HCT116 (cell line): ENCODE measurements at regions of chr16 and their contacts with region 1.

Region 1: DNA sequence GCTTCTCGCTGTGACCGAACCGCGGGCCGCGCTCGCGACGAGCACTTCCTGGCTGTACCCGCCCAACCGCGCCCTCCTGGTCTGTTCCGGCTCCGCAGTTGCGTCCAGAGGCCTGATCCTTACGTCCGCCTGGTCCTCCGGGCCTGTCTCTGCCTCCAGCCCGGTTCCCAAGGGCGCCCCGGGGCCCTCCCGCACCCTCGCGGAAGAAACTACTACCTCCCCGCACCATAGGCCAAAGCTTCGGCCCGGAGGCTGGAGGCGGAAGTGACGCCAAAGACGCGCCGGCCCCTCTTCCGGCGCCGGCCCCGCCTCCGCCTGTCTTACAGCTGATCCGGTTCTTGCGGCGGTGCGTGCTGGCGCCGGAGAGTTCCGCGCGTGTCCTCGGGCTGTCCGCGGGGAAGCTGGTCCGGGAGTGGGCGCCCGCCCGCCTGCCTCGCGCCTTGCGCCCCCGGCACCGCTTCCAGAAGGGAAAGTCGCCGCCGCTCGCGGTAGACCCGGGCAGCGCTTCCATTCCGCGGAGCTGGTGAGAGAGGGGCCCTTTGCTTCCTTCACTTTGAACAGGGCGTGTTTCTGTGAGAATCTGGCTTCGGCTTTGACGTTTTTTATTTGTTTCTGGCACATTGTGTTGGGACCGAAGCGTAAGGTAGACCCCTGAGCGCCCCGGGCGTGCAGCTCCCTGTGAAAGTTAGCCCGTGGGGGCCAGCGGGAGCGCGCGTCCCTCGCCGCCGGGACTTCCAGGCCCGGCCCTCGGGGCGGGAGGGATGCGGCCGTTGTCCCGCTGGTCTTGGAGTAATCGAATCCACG is at the start of gene ZNF778:
- DNase-seq: peak; percentile 73
- ATAC-seq: peak; percentile 84
- H3K4me3 ChIP-seq: peak within 1 kb of the TSS; percentile 88 to 93
- H3K27ac ChIP-seq: peak within 1 kb of the TSS; percentile 74
- H3K4me1 ChIP-seq: peaks cover 0 to 16% of the 10 kb centered on the region in 2 experiments; a peak in 3 of 4 replicates
- H3K27me3 ChIP-seq: no peaks in the 10 kb centered on the region
- CTCF ChIP-seq: no peak
- POLR2A ChIP-seq: peak; percentile 41
- RAD21 ChIP-seq: no peak; the same call in 1 of the 2 replicates
- total RNA-seq, gene ZNF778: 19.5 TPM

Region 2: DNA sequence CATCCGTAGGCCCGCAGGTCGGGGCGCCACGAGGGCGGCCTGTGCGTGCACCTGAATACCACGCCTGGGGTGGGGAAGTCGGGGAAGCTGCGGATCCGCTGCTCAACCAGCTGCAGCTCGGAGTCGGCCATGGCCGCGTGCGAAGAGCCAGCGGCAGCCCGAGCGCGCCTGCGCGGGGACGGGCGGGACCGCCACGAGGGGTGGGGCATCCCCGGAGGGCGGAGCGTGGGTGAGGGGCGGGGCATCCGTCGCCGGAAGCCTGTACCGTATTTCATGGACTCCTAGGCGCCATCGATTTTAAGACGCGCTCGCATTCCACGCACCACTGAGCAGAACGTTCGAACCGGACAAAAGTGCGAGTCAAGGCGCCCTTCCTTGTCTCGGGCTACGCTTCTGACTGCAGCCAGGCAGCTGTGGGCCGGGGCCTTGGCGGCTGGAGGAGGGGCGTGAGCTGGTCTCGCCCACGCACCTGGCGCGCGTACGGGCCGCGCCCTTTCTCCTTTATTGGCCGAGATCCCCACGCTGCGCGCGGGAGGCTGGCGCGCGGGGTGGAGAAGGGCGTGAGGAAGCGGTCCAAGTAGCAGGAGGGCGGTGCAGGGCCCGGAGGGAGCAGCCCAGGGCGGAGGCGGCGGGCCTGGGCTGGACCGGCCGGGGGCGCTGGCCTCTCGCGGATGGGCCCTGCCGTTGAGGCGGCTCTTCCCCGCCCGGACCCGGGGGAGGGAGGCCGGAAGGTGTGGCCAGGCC is 405.6 kb before region 1 on chr16 and contains the start of gene APRT:
- CTCF ChIA-PET with region 1: interaction called, 3 read pairs
- POLR2A ChIA-PET with region 1: interaction called, 10 read pairs
- RAD21 ChIA-PET with region 1: no interaction called
- intact Hi-C with region 1: loop called (anchors 1 kb)
- DNase-seq: peak; percentile 91
- ATAC-seq: peak; percentile 64
- H3K4me3 ChIP-seq: peak within 1 kb of the TSS; percentile 72 to 75
- H3K27ac ChIP-seq: peak within 1 kb of the TSS; percentile 100
- H3K4me1 ChIP-seq: peaks cover 22 to 59% of the 10 kb centered on the region in 2 experiments
- H3K27me3 ChIP-seq: no peaks in the 10 kb centered on the region
- CTCF ChIP-seq: peak in 2 of 3 experiments; percentile 35; a peak in 4 of 6 replicates
- POLR2A ChIP-seq: peak; percentile 77
- RAD21 ChIP-seq: no peak
- total RNA-seq, gene APRT: 311 TPM

Region 3: DNA sequence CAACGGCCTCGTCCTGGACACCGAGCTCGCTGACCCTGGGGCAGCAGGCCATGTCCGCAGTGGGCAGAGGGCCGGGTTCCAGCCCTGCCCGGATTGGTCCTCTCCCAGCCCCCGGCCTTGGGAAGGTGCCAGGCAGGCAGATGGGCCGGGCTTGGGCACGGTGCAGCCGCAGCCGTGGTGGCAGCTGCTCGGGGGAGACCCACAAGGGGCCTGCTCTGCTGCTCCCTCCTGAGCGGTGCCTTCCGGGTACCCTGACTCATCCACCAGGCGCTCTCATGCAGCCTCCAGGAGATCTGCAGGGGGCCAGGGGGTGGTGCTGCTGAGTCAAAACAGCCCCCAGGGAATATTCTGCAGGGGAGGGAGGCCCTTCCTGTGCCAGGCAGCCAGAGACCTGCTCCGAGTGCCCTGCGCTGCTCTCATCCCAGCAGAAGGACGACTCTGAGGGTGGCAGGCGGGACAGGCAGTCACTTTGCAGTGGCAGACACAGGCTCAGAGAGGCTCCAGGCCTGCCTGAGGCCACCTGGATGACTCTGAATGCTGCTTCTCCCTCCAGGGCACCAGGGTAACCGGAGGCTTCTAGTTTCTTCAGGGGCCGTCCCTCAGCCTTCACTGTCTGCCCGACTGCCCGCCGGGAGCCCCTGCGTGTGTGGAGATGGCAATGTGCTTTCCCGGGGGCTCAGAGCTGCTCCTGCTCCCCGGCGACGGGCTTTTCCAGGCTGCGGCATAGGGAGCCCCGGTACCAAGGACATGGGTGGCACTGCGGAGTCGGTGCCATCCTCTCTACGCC is 292.3 kb before region 1 on chr16:
- CTCF ChIA-PET with region 1: no interaction called
- POLR2A ChIA-PET with region 1: no interaction called
- RAD21 ChIA-PET with region 1: no interaction called
- intact Hi-C with region 1: loop called (anchors 1 kb)
- DNase-seq: peak; percentile 72
- ATAC-seq: peak; percentile 69
- H3K4me3 ChIP-seq: peak overlapping the region; percentile 14 to 39; a peak in 2 of 4 replicates
- H3K27ac ChIP-seq: peak overlapping the region; percentile 71
- H3K4me1 ChIP-seq: peaks cover 53 to 74% of the 10 kb centered on the region in 2 experiments
- H3K27me3 ChIP-seq: no peaks in the 10 kb centered on the region
- CTCF ChIP-seq: peak in 2 of 3 experiments; percentile 59 to 69; a peak in 4 of 6 replicates
- POLR2A ChIP-seq: no peak
- RAD21 ChIP-seq: no peak

Region 4: GRCh38 chr16:89026121-89026612 is 191.4 kb before region 1 on chr16:
- CTCF ChIA-PET with region 1: no interaction called
- POLR2A ChIA-PET with region 1: no interaction called
- RAD21 ChIA-PET with region 1: no interaction called
- intact Hi-C with region 1: no loop called
- DNase-seq: peak; percentile 64
- ATAC-seq: peak; percentile 75
- H3K4me3 ChIP-seq: no peak overlapping the region
- H3K27ac ChIP-seq: no peak overlapping the region
- H3K4me1 ChIP-seq: peaks cover 0 to 11% of the 10 kb centered on the region in 2 experiments; a peak in 3 of 4 replicates
- H3K27me3 ChIP-seq: peaks cover 52% of the 10 kb centered on the region
- CTCF ChIP-seq: no peak
- POLR2A ChIP-seq: no peak
- RAD21 ChIP-seq: no peak; the same call in 1 of the 2 replicates

Region 5: GRCh38 chr16:89052890-89053592 is 164.5 kb before region 1 on chr16:
- CTCF ChIA-PET with region 1: interaction called, 6 read pairs
- POLR2A ChIA-PET with region 1: no interaction called
- RAD21 ChIA-PET with region 1: no interaction called
- intact Hi-C with region 1: loop called (anchors 1 kb)
- DNase-seq: peak; percentile 92
- ATAC-seq: peak; percentile 86
- H3K4me3 ChIP-seq: peak overlapping the region; percentile 77 to 97
- H3K27ac ChIP-seq: peak overlapping the region; percentile 75
- H3K4me1 ChIP-seq: peaks cover 13 to 28% of the 10 kb centered on the region in 2 experiments
- H3K27me3 ChIP-seq: no peaks in the 10 kb centered on the region
- CTCF ChIP-seq: no peak; a peak in 1 of 6 replicates
- POLR2A ChIP-seq: peak; percentile 80
- RAD21 ChIP-seq: no peak

Region 6: GRCh38 chr16:89193021-89193575 is 24.5 kb before region 1 on chr16:
- CTCF ChIA-PET with region 1: interaction called, 14 read pairs
- POLR2A ChIA-PET with region 1: interaction called, 4 read pairs
- RAD21 ChIA-PET with region 1: no interaction called
- intact Hi-C with region 1: no loop called
- DNase-seq: peak; percentile 94
- ATAC-seq: peak; percentile 80
- H3K4me3 ChIP-seq: peak overlapping the region; percentile 19 to 26; a peak in 2 of 4 replicates
- H3K27ac ChIP-seq: no peak overlapping the region; the same call in 1 of the 2 replicates
- H3K4me1 ChIP-seq: peaks cover 0 to 16% of the 10 kb centered on the region in 2 experiments; a peak in 2 of 4 replicates
- H3K27me3 ChIP-seq: no peaks in the 10 kb centered on the region
- CTCF ChIP-seq: no peak
- POLR2A ChIP-seq: no peak
- RAD21 ChIP-seq: no peak